ENCODE measurements at regions of chr5 and their contacts with region 1.

Region 1: GRCh38 chr5:173238312-173239232 is 3.6 kb upstream of the NKX2-5 start:
- DNase-seq: peak in 1 of 9 donors; percentile 23
- ATAC-seq: no peak
- H3K4me3 ChIP-seq: peak overlapping the region; percentile 20
- H3K4me3 Mint-ChIP-seq: peak overlapping the region; percentile 51 to 81 (median 72)
- H3K27ac ChIP-seq: no peak overlapping the region
- H3K27ac Mint-ChIP-seq: peak overlapping the region in 1 of 9 donors; percentile 82
- H3K4me1 ChIP-seq: peaks cover 0 to 18% of the 10 kb centered on the region in 2 donors
- H3K4me1 Mint-ChIP-seq: peaks cover 22 to 56% (median 47%) of the 10 kb centered on the region in 7 donors
- H3K27me3 ChIP-seq: peaks cover 4 to 32% of the 10 kb centered on the region in 2 donors
- H3K27me3 Mint-ChIP-seq: peaks cover 88 to 96% (median 92%) of the 10 kb centered on the region in 5 donors

Region 2: GRCh38 chr5:171310819-171311697 is 1927.5 kb before region 1 on chr5:
- CTCF ChIA-PET with region 1: no interaction called
- POLR2A ChIA-PET with region 1: no interaction called
- intact Hi-C with region 1: loop called in 1 of 2 experiments (anchors 5 kb)
- DNase-seq: peak in 1 of 9 donors; percentile 23
- ATAC-seq: peak; percentile 18
- H3K4me3 ChIP-seq: no peak overlapping the region
- H3K4me3 Mint-ChIP-seq: peak overlapping the region in 3 of 10 donors; percentile 16 to 61 (median 23)
- H3K27ac ChIP-seq: no peak overlapping the region
- H3K27ac Mint-ChIP-seq: peak overlapping the region in 1 of 9 donors; percentile 76
- H3K4me1 ChIP-seq: no peaks in the 10 kb centered on the region
- H3K4me1 Mint-ChIP-seq: peaks cover 14 to 41% (median 22%) of the 10 kb centered on the region in 7 donors
- H3K27me3 ChIP-seq: no peaks in the 10 kb centered on the region
- H3K27me3 Mint-ChIP-seq: peaks cover 48 to 79% (median 60%) of the 10 kb centered on the region in 5 donors

Region 3: DNA sequence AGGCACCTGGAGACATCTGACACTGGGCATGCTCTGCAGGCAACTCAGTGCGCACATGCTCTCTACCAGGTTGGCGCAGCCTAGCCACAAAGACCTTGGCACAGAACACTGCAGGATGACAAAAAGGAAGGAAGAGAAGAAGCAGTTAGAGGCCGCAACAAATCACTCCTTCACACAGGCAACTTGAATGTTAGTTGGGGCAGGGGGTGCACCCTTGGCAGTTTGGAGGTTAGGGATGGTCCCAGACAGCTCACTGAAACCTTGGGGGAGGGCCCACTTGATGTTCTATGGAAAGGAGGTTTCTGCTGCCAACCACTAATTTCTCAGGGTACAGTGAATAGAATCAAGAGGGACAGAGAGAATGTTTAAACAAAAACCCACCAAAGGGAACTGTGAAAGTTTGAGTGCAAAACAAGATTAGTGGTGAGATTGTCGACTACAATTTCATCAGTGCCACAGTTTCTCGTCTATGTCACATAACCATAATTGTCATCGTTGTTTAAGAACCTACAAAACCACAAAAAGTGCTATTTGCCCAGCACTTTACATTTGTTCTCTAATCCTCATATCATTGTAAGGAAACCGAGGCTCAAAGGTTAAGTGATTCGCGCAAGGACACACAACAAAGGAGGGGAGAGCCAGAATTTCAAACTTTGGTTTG is 1280.9 kb before region 1 on chr5:
- CTCF ChIA-PET with region 1: no interaction called
- POLR2A ChIA-PET with region 1: no interaction called
- intact Hi-C with region 1: no loop called
- DNase-seq: peak in 8 of 9 donors; percentile 15 to 45 (median 30)
- ATAC-seq: peak; percentile 79
- H3K4me3 ChIP-seq: no peak overlapping the region
- H3K4me3 Mint-ChIP-seq: peak overlapping the region; percentile 1 to 69 (median 56)
- H3K27ac ChIP-seq: peak overlapping the region; percentile 14
- H3K27ac Mint-ChIP-seq: peak overlapping the region in 8 of 9 donors; percentile 64 to 90 (median 74)
- H3K4me1 ChIP-seq: peaks cover 26 to 30% of the 10 kb centered on the region in 2 donors
- H3K4me1 Mint-ChIP-seq: peaks cover 31 to 95% (median 73%) of the 10 kb centered on the region in 7 donors
- H3K27me3 ChIP-seq: no peaks in the 10 kb centered on the region
- H3K27me3 Mint-ChIP-seq: no peaks in the 10 kb centered on the region

Region 4: GRCh38 chr5:173410459-173411233 is 172.1 kb after region 1 on chr5:
- CTCF ChIA-PET with region 1: no interaction called
- POLR2A ChIA-PET with region 1: no interaction called
- intact Hi-C with region 1: no loop called
- DNase-seq: no peak
- ATAC-seq: no peak
- H3K4me3 ChIP-seq: no peak overlapping the region
- H3K4me3 Mint-ChIP-seq: no peak overlapping the region
- H3K27ac ChIP-seq: no peak overlapping the region
- H3K27ac Mint-ChIP-seq: peak overlapping the region in 1 of 9 donors; percentile 31
- H3K4me1 ChIP-seq: no peaks in the 10 kb centered on the region
- H3K4me1 Mint-ChIP-seq: no peaks in the 10 kb centered on the region
- H3K27me3 ChIP-seq: peaks cover 0 to 3% of the 10 kb centered on the region in 2 donors
- H3K27me3 Mint-ChIP-seq: peaks cover 0 to 28% (median 8%) of the 10 kb centered on the region in 5 donors

Region 5: GRCh38 chr5:174724491-174725260 is 1486.1 kb after region 1 on chr5 and contains the start of gene MSX2:
- CTCF ChIA-PET with region 1: no interaction called
- POLR2A ChIA-PET with region 1: no interaction called
- intact Hi-C with region 1: loop called in 1 of 2 experiments (anchors 5 kb)
- DNase-seq: peak in 2 of 9 donors; percentile 7 to 8
- ATAC-seq: peak; percentile 64
- H3K4me3 ChIP-seq: no peak within 1 kb of the TSS
- H3K4me3 Mint-ChIP-seq: peak within 1 kb of the TSS; percentile 49 to 85 (median 71)
- H3K27ac ChIP-seq: no peak within 1 kb of the TSS
- H3K27ac Mint-ChIP-seq: peak within 1 kb of the TSS in 1 of 9 donors; percentile 79
- H3K4me1 ChIP-seq: no peaks in the 10 kb centered on the region
- H3K4me1 Mint-ChIP-seq: peaks cover 4 to 31% (median 13%) of the 10 kb centered on the region in 7 donors
- H3K27me3 ChIP-seq: peaks cover 0 to 27% of the 10 kb centered on the region in 2 donors
- H3K27me3 Mint-ChIP-seq: peaks cover 81 to 90% (median 84%) of the 10 kb centered on the region in 5 donors
- total RNA-seq, gene MSX2: not detected